ENCODE measurements at regions of chr10 and their contacts with region 1.

Region 1: GRCh38 chr10:69375307-69376151 is 41.2 kb downstream of the TACR2 start:
- DNase-seq: no peak
- ATAC-seq: peak; percentile 69
- H3K4me3 ChIP-seq: no peak overlapping the region
- H3K27ac ChIP-seq: peak overlapping the region; percentile 30
- H3K4me1 ChIP-seq: peaks cover 34% of the 10 kb centered on the region
- H3K27me3 ChIP-seq: no peaks in the 10 kb centered on the region
- CTCF ChIP-seq: no peak

Region 2: GRCh38 chr10:69327463-69328379 is 47.8 kb before region 1 on chr10:
- intact Hi-C with region 1: loop called (anchors 10 kb)
- DNase-seq: peak; percentile 88
- ATAC-seq: peak; percentile 97
- H3K4me3 ChIP-seq: peak overlapping the region; percentile 11
- H3K27ac ChIP-seq: peak overlapping the region; percentile 55
- H3K4me1 ChIP-seq: peaks cover 51% of the 10 kb centered on the region
- H3K27me3 ChIP-seq: no peaks in the 10 kb centered on the region
- CTCF ChIP-seq: no peak

Region 3: DNA sequence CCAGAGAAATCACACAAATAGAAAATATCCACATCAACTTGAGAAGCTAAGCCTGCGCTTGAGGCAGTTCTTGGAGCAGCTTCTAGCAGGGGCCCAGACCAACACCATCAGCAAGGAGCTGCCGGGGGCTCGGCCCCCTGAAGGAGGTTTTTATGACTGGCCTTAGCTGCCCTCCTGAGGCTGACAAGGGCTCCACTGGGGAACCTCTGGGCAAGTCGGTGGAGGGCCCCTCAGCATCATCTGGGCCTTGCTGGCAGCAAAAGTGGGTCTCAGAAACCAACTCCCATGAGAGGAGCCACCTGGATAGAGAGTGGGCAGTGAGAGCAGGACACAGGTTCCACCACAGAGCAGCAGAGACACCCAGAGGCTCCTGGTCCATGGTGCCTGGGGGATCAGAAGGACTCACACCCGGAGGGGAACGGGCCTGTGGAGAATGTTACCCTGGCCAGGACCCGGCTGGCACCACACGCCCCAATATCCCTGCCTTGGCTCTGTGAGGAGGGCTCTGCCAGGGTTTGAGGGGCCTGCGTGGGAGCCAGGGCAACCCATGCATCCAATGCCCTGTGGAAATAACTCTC is 141.8 kb after region 1 on chr10:
- intact Hi-C with region 1: no loop called
- DNase-seq: no peak
- ATAC-seq: no peak
- H3K4me3 ChIP-seq: no peak overlapping the region
- H3K27ac ChIP-seq: no peak overlapping the region
- H3K4me1 ChIP-seq: no peaks in the 10 kb centered on the region
- H3K27me3 ChIP-seq: no peaks in the 10 kb centered on the region
- CTCF ChIP-seq: no peak

Measured in upper lobe of right lung (tissue), 1 donor.